ENCODE measurements at regions of chr2 and their contacts with region 1.

Region 1: GRCh38 chr2:119435081-119435952 is 3.7 kb downstream of the TMEM37 start:
- DNase-seq: no peak
- CTCF ChIP-seq: no peak

Region 2: GRCh38 chr2:119349305-119349704 is 86.0 kb before region 1 on chr2:
- CTCF ChIA-PET with region 1: no interaction called
- POLR2A ChIA-PET with region 1: no interaction called
- DNase-seq: no peak
- CTCF ChIP-seq: no peak

Region 3: GRCh38 chr2:119407430-119408220 is 27.7 kb before region 1 on chr2:
- CTCF ChIA-PET with region 1: interaction called, 12 read pairs
- POLR2A ChIA-PET with region 1: no interaction called
- DNase-seq: peak; percentile 73
- CTCF ChIP-seq: peak; percentile 68

Region 4: GRCh38 chr2:119485336-119486110 is 50.2 kb after region 1 on chr2:
- CTCF ChIA-PET with region 1: no interaction called
- POLR2A ChIA-PET with region 1: no interaction called
- DNase-seq: no peak
- CTCF ChIP-seq: no peak

Measured in GM10248 (cell line).